T-cell (primary cell): ENCODE measurements at regions of chr4 and their contacts with region 1.

Region 1: DNA sequence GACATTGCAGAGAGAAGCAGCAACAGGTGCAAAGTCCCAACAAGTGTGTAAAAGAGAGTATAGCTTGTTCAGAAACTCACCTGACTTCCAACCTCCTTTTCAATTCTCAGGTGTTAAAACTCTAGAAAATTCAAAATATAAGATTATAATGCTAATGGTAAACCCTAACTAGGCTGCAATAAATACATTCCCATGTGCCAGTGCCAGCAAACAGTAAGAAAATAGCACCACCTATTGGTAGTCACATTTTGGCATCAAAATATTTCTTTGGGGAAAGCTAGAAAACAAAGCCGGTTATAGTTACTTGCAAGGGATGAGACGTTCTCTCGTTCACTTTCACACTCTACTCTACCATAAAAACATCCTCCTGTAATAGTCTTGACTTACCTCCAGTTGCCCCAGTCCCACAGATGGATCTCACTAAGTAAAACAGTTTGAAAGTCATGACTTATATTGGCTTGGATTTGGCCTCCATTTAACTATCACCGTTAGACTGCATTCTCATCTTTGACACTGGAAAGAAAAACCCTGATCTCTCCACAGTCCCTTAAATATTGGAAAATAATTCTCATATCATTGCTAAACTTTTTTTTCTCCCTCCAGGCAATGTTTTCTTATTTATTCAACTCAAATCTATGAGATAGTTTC is 9.6 kb downstream of the BMP3 start:
- DNase-seq: peak in 1 of 35 experiments; percentile 61
- ATAC-seq: peak in 2 of 4 experiments; percentile 24 to 39
- H3K4me3 ChIP-seq: no peak overlapping the region
- H3K4me3 Mint-ChIP-seq: no peak overlapping the region
- H3K27ac ChIP-seq: no peak overlapping the region
- H3K27ac Mint-ChIP-seq: no peak overlapping the region
- H3K4me1 ChIP-seq: no peaks in the 10 kb centered on the region
- H3K4me1 Mint-ChIP-seq: no peaks in the 10 kb centered on the region
- H3K27me3 ChIP-seq: peaks cover 0 to 2% of the 10 kb centered on the region in 2 experiments
- H3K27me3 Mint-ChIP-seq: peaks cover 9 to 10% of the 10 kb centered on the region in 2 donors

Region 2: DNA sequence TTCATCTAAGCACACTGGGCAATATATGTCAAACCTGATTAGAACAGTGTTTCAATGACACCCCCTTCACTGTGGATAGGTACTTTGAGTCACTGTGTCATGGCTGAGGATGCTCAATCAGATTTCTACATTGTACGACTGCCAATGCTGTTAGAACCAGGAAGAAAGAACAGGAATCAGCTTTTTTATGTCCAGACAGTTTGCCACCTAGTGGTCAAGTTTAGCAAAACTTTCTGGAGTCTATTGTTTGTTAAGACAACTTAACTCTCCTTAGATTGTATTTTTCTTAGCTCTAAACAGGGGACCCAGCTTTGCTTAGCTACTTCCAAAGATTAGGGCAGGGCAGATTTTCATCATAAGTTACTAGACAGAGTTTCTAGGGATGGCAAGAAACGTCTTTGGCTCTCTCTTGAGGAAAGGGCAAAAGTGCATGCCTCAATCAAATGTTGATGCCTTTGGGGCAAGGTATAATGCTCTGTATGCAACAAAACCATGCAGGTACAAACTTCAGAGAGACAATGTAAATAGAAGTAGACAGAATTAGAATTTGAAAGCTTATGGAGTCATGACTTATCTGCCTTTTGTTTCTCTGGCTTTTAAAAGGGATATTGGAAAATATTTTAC is 50.1 kb before region 1 on chr4:
- CTCF ChIA-PET with region 1: interaction called, 10 to 11 read pairs
- POLR2A ChIA-PET with region 1: no interaction called
- DNase-seq: peak in 12 of 35 experiments; percentile 2 to 69 (median 6)
- ATAC-seq: peak in 2 of 4 experiments; percentile 13 to 53
- H3K4me3 ChIP-seq: no peak overlapping the region
- H3K4me3 Mint-ChIP-seq: no peak overlapping the region
- H3K27ac ChIP-seq: no peak overlapping the region
- H3K27ac Mint-ChIP-seq: no peak overlapping the region
- H3K4me1 ChIP-seq: no peaks in the 10 kb centered on the region
- H3K4me1 Mint-ChIP-seq: peaks cover 0 to 5% (median 4%) of the 10 kb centered on the region in 3 donors
- H3K27me3 ChIP-seq: no peaks in the 10 kb centered on the region
- H3K27me3 Mint-ChIP-seq: peaks cover 5 to 13% of the 10 kb centered on the region in 2 donors